ENCODE measurements at regions of chr2 and their contacts with region 1.

Region 1: DNA sequence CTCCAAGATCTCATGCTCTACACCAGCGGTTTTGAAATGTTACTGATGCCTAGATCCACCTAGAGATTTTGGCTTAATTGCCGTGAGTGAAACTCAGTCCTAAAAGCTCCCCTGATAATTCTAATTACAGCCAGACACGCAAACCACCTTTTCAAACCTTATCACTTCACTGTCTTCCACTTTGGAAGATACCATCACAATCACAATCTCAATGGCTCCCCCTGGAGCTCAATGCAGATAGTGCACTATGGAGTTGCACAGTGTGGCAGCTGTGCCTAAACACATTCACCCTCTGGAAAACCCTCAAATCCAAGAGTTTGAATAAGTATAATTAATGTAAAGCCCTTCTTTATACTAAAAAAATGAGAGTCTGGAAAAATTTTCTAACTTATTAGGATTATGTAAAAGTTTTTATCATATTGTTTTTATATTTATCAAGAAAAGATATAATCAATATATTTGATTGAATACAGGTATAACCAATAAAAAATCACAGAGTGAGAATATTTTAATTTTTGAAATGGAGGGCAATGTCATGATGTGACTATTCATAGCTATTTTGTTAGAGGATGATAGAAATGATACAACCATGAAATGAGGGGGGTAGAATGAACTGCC is 102.9 kb upstream of the SLC8A1 start:
- DNase-seq: peak; percentile 52
- H3K4me3 ChIP-seq: peak overlapping the region; percentile 30
- H3K27ac ChIP-seq: no peak overlapping the region
- H3K4me1 ChIP-seq: peaks cover 23% of the 10 kb centered on the region
- H3K27me3 ChIP-seq: no peaks in the 10 kb centered on the region
- CTCF ChIP-seq: peak; percentile 95

Region 2: DNA sequence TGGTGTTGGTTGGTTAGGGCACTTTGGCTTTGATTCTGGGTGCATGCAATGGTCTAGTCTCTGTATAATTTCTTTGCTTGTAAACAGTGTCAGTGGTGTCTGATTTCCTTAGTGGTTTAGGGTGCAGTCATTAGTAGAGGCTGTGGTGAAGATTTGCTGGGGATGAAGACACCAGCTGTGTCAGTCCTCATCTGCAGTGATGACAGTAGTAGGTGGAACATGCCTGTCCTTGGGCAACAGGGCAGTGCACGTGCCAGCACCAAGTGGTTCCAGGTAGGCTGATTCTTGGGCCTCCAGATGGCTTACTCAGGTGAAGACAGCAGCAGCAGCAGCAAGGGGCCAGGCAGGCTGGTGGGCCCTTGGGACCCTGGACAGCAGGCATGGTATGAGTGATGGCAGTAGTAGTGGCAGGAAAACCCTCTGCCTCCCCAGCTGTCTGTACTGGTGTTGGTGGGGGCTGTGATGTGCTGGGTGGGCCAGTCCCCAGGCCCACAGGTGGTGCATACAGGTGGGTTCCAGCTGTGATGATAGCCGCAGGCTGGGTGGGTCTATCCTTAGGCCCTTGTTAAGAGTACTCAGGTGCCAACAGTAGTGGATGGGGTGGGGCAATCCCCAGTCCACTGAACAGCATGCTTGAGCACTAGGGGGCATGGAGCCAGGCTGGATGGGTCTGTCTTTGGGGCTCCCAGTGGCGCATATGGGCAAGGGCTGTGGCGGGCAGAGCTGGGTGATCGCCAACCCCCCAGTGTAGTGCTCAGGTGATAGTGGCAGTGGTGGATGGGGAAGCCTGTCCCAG is 635.1 kb before region 1 on chr2:
- intact Hi-C with region 1: loop called (anchors 5 kb)
- DNase-seq: no peak
- H3K4me3 ChIP-seq: no peak overlapping the region
- H3K27ac ChIP-seq: no peak overlapping the region
- H3K4me1 ChIP-seq: no peaks in the 10 kb centered on the region
- H3K27me3 ChIP-seq: no peaks in the 10 kb centered on the region
- CTCF ChIP-seq: no peak

Region 3: GRCh38 chr2:40363631-40364030 is 191.1 kb before region 1 on chr2:
- intact Hi-C with region 1: no loop called
- DNase-seq: no peak
- H3K4me3 ChIP-seq: peak overlapping the region; percentile 46
- H3K27ac ChIP-seq: peak overlapping the region; percentile 55
- H3K4me1 ChIP-seq: peaks cover 91% of the 10 kb centered on the region
- H3K27me3 ChIP-seq: no peaks in the 10 kb centered on the region
- CTCF ChIP-seq: no peak

Region 4: GRCh38 chr2:40421631-40422297 is 133.0 kb before region 1 on chr2:
- intact Hi-C with region 1: no loop called
- DNase-seq: no peak
- H3K4me3 ChIP-seq: no peak overlapping the region
- H3K27ac ChIP-seq: peak overlapping the region; percentile 71
- H3K4me1 ChIP-seq: peaks cover 96% of the 10 kb centered on the region
- H3K27me3 ChIP-seq: no peaks in the 10 kb centered on the region
- CTCF ChIP-seq: no peak

Region 5: GRCh38 chr2:40915651-40916050 is 360.9 kb after region 1 on chr2:
- intact Hi-C with region 1: no loop called
- DNase-seq: no peak
- H3K4me3 ChIP-seq: no peak overlapping the region
- H3K27ac ChIP-seq: no peak overlapping the region
- H3K4me1 ChIP-seq: peaks cover 7% of the 10 kb centered on the region
- H3K27me3 ChIP-seq: no peaks in the 10 kb centered on the region
- CTCF ChIP-seq: no peak

Region 6: GRCh38 chr2:41180387-41180786 is 625.6 kb after region 1 on chr2:
- intact Hi-C with region 1: no loop called
- DNase-seq: no peak
- H3K4me3 ChIP-seq: no peak overlapping the region
- H3K27ac ChIP-seq: no peak overlapping the region
- H3K4me1 ChIP-seq: no peaks in the 10 kb centered on the region
- H3K27me3 ChIP-seq: no peaks in the 10 kb centered on the region
- CTCF ChIP-seq: no peak

Measured in left ventricle myocardium inferior (tissue), 1 donor.